Gastrocnemius medialis (tissue), 4 donors: ENCODE measurements at regions of chr11 and their contacts with region 1.

Region 1: DNA sequence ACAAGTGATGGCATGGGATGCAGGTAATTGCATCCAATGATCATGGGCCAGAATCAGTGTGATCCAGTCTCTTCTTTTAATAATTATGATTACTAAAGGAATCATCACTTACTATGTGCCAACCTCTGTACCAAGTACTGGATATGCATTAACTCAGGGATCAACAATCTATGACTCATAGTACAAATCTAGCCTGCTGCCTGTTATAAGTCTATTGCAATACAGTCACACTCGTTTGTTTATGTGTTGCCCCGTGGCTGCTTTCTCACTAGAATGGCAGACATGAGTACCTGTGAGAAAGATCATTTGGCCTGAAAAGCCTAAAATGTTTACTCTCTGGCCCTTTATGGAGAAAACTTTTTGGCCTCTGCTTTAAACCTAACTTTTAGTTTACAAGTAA is 45.0 kb downstream of the OR6Q1 start:
- DNase-seq: no peak
- ATAC-seq: no peak
- H3K4me3 ChIP-seq: no peak overlapping the region
- H3K27ac ChIP-seq: no peak overlapping the region
- H3K4me1 ChIP-seq: no peaks in the 10 kb centered on the region
- H3K27me3 ChIP-seq: no peaks in the 10 kb centered on the region
- CTCF ChIP-seq: no peak
- POLR2A ChIP-seq: no peak

Region 2: DNA sequence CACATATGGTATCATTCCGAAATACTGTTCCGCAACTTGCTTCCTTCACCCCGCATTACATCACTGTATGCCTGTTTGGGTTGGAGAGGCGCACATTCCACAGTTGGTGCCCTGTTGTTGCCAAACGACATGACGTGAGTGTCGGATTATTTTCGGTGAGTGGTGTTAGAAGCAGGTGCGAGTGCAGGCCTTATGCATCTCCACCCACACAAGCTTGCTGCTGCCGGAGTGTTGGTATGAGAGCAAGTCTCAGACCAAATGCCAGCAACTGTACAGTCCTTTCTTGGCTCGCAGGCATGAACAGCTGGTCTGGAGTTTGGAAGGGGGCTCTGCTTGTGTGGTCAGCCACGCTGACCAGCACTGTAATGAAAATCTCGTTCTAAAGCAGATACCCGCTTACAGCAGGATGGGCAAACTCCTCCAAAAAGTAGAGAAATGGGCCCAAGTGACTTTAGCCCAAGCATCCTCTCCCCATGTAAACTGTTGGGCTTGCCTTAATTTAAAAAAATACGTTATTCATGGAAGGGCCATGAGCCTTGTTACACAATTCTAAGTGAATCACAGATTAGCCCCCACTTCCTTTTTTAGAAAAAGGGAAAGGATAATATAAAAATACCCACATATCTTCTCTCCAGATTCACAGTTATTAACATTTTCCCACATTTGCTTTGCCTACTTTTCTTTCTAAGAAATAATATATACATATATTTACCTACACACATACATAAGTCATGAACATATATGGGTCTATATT is 100.8 kb before region 1 on chr11:
- in situ Hi-C with region 1: loop called in 1 of 4 experiments (anchors 25 kb)
- intact Hi-C with region 1: no loop called
- DNase-seq: peak in 1 of 2 donors; percentile 16
- ATAC-seq: no peak
- H3K4me3 ChIP-seq: no peak overlapping the region
- H3K27ac ChIP-seq: no peak overlapping the region
- H3K4me1 ChIP-seq: peaks cover 0 to 4% of the 10 kb centered on the region in 2 donors
- H3K27me3 ChIP-seq: no peaks in the 10 kb centered on the region
- CTCF ChIP-seq: no peak
- POLR2A ChIP-seq: no peak